ENCODE measurements at regions of chr17 and their contacts with region 1.

Region 1: DNA sequence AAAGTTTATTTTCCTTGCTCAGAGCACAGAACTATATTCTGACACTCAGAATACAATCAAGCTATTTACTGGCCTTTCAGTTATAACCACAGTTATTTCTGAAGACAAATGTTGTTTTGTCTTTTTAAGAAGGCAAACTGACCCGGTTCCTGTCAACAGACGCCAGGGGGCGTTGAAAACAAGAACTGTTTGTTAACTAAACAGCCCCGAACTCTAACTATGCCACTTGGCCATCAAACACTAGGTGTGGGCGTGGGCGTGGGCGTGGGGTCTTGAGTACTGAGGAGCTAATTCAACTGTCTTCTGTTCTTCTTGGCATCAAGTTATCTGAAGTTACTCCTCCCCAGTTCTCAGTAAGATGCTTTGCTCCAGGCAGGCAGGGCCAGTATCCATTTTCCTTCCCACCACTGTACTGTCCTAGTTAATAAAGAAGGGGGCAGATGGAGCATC is 63.2 kb upstream of the MTMR4 start:
- DNase-seq: peak in 1 of 2 experiments; percentile 67
- H3K4me3 ChIP-seq: no peak overlapping the region
- H3K27ac ChIP-seq: no peak overlapping the region
- H3K4me1 ChIP-seq: no peaks in the 10 kb centered on the region
- H3K27me3 ChIP-seq: no peaks in the 10 kb centered on the region
- CTCF ChIP-seq: peak in 2 of 3 experiments; percentile 63 to 69; a peak in 3 of 4 replicates
- EP300 ChIP-seq: no peak
- POLR2A ChIP-seq: no peak
- RAD21 ChIP-seq: peak; percentile 46 to 55; a peak in 3 of 4 replicates

Region 2: DNA sequence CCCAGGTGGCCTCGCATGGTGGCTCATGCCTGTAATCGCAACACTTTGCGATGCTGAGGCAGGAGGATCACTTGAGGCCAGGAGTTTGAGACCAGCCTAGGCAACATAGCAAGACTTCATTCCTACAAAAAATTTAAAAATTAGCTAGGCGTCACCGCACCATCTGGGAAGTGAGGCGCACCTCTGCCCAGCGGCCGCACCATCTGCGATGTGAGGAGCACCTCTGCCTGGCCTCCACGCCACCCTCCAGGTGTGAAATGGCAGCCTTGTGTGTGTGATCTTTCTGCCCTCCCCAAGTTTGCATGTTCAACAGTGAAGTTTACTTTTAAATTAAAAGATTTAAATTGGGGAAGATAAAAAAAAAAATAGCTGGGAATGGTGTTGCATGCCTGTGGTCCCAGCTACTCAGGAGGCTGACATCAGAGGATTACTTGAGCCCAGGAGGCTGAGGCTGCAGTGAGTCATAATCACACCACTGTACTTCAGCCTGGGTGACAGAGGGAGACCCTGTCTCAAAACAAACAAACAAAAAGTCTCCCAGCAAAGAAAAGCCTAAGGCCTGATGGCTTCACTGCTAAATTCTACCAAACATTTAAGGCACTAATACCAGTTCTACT is 125.0 kb before region 1 on chr17:
- CTCF ChIA-PET with region 1: no interaction called
- POLR2A ChIA-PET with region 1: no interaction called
- DNase-seq: no peak
- H3K4me3 ChIP-seq: no peak overlapping the region
- H3K27ac ChIP-seq: no peak overlapping the region
- H3K4me1 ChIP-seq: no peaks in the 10 kb centered on the region
- H3K27me3 ChIP-seq: no peaks in the 10 kb centered on the region
- CTCF ChIP-seq: no peak
- EP300 ChIP-seq: no peak
- POLR2A ChIP-seq: no peak
- RAD21 ChIP-seq: no peak

Region 3: DNA sequence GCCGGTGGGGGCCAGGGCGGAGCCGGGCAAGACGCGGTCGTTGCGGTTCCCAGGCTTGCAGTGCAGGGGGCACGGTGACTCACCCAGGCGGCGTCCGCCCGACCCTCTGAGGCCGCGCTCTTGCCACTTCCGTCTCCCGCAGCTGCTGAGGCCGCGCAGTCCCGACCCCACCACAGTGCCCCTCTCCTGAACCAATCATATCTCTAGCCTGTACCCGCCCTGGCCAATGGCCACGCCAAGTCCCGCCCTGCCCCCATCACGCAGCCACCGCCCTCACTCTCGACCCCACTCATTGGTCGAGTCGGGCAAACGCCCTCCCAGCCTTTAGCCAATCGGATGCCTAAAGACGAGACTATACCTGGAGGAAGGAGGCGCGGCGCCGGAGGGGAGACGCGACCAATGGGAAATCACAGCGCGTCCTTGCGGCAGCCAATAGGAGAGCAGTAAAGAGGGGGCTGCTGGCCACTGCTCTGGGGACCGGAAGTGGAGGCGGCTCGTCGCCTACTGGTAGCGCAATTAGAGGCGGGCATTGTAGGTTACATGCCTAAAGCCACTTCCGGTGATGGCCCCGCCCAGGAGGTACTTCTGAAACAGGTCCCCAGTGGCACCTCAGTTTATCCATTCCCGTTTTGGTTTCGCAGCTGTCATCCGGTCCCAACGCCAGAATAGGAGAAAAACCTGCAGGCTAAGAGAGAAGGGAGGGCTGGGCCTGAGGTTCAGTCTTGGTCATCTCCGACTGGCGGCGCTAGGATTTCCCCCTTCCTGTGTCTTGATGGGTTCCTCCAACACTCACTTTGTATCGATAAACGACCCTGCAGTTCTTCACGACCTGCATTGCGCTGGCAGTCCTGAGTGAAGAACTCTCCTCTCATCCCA is 59.7 kb before region 1 on chr17:
- CTCF ChIA-PET with region 1: interaction called, 10 read pairs
- POLR2A ChIA-PET with region 1: interaction called, 3 read pairs
- DNase-seq: peak; percentile 95 to 100
- H3K4me3 ChIP-seq: peak overlapping the region; percentile 79 to 94 (median 86)
- H3K27ac ChIP-seq: peak overlapping the region; percentile 58
- H3K4me1 ChIP-seq: peaks cover 0 to 17% (median 5%) of the 10 kb centered on the region in 4 experiments; a peak in 5 of 7 replicates
- H3K27me3 ChIP-seq: no peaks in the 10 kb centered on the region
- CTCF ChIP-seq: no peak
- EP300 ChIP-seq: 0 out of 3 replicates have a peak, but pooled peaks of 1 of the 2 experiments have one; percentile 42
- POLR2A ChIP-seq: peak in 1 of 2 experiments; percentile 79; a peak in 1 of 3 replicates
- RAD21 ChIP-seq: no peak

Region 4: DNA sequence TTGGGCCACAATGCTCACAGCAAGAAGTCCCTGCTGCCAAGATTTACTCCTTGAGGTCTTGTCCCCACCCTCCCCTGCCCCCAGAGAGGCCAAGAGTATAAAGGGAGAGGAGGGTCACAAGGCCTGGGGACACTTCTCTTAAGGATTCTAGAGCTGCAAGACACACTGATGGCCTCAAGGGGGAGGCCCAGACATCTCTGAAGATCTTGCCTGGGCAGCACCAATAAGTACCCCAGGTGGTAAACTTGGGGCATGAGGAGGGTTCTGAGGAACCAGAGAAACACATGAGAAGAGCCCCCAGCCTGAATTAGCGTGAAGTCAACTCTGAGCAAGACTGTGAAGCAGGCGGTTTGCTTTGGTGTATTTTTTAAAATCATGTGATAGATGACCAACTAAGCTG is 36.4 kb before region 1 on chr17:
- CTCF ChIA-PET with region 1: interaction called, 37 read pairs
- POLR2A ChIA-PET with region 1: no interaction called
- DNase-seq: no peak
- H3K4me3 ChIP-seq: no peak overlapping the region
- H3K27ac ChIP-seq: no peak overlapping the region
- H3K4me1 ChIP-seq: no peaks in the 10 kb centered on the region; a peak in 1 of 7 replicates
- H3K27me3 ChIP-seq: no peaks in the 10 kb centered on the region
- CTCF ChIP-seq: peak; percentile 61 to 65 (median 64)
- EP300 ChIP-seq: no peak
- POLR2A ChIP-seq: no peak
- RAD21 ChIP-seq: peak; percentile 64 to 69

Region 5: GRCh38 chr17:58565780-58566189 is 11.9 kb before region 1 on chr17:
- CTCF ChIA-PET with region 1: interaction called, 22 read pairs
- POLR2A ChIA-PET with region 1: interaction called, 4 read pairs
- DNase-seq: peak in 1 of 2 experiments; percentile 29
- H3K4me3 ChIP-seq: peak overlapping the region in 1 of 4 experiments; percentile 7; a peak in 1 of 8 replicates
- H3K27ac ChIP-seq: no peak overlapping the region
- H3K4me1 ChIP-seq: peaks cover 2 to 17% (median 12%) of the 10 kb centered on the region in 4 experiments; a peak in 6 of 7 replicates
- H3K27me3 ChIP-seq: no peaks in the 10 kb centered on the region
- CTCF ChIP-seq: no peak
- EP300 ChIP-seq: no peak
- POLR2A ChIP-seq: no peak
- RAD21 ChIP-seq: no peak

Region 6: DNA sequence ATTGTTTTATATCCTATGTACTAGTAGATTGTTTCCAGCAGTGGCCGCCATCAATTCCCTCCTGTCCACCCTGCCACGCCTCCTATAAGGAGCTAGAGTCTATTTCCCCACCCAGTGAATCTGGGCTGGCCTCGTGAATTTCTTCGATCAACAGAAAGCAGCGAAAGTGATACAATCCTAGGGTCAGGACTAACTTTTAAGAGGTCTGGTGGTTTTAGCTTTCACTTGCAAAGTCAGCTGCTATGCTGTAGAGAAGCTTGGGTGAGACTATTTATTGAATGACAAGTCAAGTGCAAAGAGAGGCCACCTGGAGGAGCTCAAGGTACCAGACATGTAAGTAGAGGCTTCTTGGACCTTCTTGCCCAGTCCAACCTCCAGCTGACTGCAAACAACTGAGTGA is 17.7 kb after region 1 on chr17:
- CTCF ChIA-PET with region 1: interaction called, 42 read pairs
- POLR2A ChIA-PET with region 1: no interaction called
- DNase-seq: no peak
- H3K4me3 ChIP-seq: no peak overlapping the region
- H3K27ac ChIP-seq: no peak overlapping the region
- H3K4me1 ChIP-seq: no peaks in the 10 kb centered on the region
- H3K27me3 ChIP-seq: no peaks in the 10 kb centered on the region; a peak in 1 of 7 replicates
- CTCF ChIP-seq: no peak
- EP300 ChIP-seq: no peak
- POLR2A ChIP-seq: no peak
- RAD21 ChIP-seq: peak; percentile 20 to 44

Region 7: DNA sequence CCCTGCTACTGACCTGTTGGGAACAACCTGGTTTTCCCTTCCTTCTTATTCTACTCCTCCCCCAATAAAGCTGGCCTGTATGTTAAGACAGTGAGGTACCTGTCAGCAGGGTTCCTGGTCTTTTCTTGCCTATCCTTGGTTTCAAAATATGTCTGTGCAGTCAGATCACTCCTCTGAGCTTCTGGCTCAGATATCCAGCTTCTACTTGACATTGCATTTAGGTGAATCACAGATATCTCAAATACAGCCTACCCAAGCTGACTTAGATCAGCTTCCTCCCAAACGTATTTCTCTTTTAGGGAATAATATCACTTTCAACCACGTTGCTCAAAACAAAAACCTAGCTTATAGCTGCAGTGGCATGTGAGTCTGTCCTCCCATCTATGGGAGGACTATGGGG is 65.5 kb after region 1 on chr17:
- CTCF ChIA-PET with region 1: interaction called, 16 read pairs
- POLR2A ChIA-PET with region 1: no interaction called
- DNase-seq: no peak
- H3K4me3 ChIP-seq: no peak overlapping the region
- H3K27ac ChIP-seq: no peak overlapping the region
- H3K4me1 ChIP-seq: no peaks in the 10 kb centered on the region
- H3K27me3 ChIP-seq: no peaks in the 10 kb centered on the region
- CTCF ChIP-seq: no peak
- EP300 ChIP-seq: no peak
- POLR2A ChIP-seq: no peak
- RAD21 ChIP-seq: no peak

Measured in H1 (cell line).